OCI-LY7 (cell line): ENCODE measurements at regions of chr7 and their contacts with region 1.

Region 1: DNA sequence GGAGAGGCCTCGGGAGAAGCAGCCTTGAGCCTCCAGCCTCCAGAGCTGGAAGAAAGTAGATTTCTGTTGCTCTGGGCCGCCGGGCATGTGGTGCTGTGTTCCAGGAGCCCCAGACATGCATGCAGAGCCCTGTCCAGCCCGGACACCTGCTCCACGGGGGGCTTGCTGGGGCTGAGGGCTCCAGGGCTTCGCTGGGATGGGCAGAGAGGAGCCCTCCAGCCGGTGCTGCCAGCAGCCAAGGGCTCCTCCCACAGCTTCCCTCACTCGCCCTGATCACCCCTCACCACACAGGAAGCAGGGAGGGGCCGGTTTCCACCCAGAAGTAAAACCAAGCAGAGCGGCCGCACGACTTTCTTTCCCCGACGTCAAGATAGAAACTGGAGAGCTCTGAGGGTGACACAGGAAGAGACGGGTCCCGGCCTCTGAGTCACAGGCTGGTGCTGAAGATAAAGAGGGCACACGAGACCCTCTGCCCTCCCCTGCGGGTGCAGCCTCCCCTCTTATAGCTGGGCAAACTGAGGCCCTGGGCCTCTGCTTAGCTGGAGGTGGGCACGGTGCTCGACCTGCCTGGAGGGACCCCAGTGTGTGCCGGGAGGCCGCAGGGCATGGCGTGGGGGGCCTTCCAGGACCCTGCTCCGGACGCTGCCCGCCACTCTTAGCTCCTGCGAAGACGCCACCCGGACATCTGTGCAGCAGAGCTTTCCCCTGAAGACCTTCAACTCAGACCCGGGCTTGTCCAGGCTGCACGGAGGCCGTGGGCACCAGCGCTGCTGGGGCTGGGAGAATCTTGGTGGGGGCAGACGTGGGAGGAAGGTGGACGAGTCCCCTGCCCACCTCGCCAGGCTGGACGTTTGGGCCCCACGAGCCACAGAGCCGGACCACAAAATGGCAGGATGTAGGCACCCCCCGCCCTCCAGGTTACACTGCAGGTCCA is 31.1 kb downstream of the ADAP1 start:
- DNase-seq: peak; percentile 91
- H3K4me3 ChIP-seq: peak overlapping the region; percentile 59
- H3K27ac ChIP-seq: peak overlapping the region; percentile 72
- H3K4me1 ChIP-seq: peaks cover 33% of the 10 kb centered on the region
- CTCF ChIP-seq: no peak

Region 2: DNA sequence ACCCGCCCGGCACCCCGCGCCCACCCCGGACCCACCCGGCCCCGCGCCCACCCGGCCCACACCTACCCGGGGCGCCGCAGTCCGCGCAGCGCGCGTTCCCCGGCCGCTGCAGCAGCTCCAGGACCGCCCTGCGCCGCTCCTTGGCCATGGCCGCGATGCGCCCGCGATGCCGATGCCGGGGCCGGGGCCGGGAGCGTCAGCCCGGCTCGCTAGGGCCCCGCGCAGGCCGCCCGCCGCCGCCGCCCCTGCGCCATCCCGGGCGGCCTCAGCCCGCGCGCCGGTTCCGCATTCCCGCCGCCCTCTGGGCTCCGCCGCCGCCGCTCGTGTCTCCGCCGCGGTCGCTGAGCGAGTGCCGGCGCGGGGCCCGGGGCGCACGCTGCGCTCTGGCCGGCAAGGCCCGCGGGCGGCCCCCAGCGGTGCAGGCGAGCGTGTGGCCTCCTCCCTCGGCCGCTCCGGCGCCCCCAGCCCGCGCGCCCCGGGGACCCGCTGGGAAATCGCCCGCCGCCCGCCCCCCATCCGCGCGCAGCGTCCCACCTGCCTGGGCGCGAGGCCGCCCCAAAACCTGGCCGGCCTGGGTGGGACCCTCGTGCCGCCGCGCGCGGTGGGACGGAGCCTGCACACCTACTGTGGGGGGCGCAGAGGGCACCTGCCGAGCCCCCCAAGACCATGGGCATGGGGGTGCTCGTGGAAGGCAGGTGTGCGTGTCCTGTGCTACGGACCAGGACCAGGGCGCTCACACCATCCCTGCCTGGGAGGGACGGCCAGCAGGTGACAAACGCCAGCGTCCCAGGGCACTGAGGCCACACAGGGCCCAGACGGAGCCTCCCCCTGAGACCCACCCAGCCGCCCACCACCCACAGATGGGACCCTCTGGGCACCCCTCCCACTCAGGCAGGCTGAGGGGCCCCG is 31.2 kb after region 1 on chr7 and contains the start of gene ADAP1:
- CTCF ChIA-PET with region 1: interaction called, 4 read pairs
- POLR2A ChIA-PET with region 1: no interaction called
- intact Hi-C with region 1: loop called (anchors 1 kb)
- DNase-seq: peak; percentile 52
- H3K4me3 ChIP-seq: no peak within 1 kb of the TSS
- H3K27ac ChIP-seq: no peak within 1 kb of the TSS
- H3K4me1 ChIP-seq: peaks cover 22% of the 10 kb centered on the region
- CTCF ChIP-seq: no peak
- total RNA-seq, gene ADAP1: 0.41 and 2.4 TPM in 2 replicates

Region 3: DNA sequence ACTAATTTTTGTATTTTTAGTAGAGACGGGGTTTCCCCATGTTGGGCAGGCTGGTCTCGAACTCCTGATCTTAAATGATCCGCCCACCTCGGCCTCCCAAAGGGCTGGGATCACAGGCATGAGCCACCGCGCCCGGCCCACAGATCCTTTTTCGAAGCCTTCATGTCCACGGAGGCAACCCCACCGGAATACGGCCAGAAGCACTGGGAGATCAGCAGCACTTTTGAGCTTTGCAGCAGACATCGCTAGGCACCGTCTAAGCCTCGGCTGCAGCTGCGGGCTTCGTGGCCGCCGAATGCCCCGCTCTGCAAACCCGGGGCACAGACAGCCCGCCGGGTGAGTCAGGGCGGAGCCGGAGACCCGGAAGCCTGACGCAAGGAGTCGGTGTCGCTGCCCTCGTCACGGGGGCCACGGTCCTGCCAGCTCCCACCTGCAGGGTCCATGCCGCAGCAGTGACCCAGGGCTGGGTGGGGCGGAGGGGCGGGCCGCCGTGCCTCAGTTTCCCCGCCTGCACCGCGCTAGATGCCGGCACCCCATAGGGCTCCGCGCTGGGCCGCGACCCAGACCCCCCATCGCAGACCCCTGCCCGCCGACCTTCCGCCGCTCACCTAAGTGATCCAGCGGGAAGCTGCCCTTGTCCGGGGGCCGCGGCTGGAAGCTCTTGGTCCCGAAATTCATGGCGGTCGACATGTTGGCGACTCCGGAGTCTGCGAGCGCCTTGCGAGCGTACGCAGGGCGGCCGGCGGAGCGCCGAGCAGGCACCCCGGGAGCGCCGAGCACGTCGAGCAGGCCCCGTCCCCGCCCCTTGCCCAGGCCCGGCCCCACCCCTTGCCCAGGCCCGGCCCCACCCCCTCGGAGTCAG is 51.7 kb after region 1 on chr7 and contains the start of gene COX19:
- CTCF ChIA-PET with region 1: no interaction called
- POLR2A ChIA-PET with region 1: interaction called, 6 read pairs
- intact Hi-C with region 1: loop called (anchors 2 kb)
- DNase-seq: peak; percentile 94
- H3K4me3 ChIP-seq: peak within 1 kb of the TSS; percentile 100
- H3K27ac ChIP-seq: peak within 1 kb of the TSS; percentile 73
- H3K4me1 ChIP-seq: peaks cover 74% of the 10 kb centered on the region
- CTCF ChIP-seq: no peak
- total RNA-seq, gene COX19: 20.3 and 23.2 TPM in 2 replicates

Region 4: DNA sequence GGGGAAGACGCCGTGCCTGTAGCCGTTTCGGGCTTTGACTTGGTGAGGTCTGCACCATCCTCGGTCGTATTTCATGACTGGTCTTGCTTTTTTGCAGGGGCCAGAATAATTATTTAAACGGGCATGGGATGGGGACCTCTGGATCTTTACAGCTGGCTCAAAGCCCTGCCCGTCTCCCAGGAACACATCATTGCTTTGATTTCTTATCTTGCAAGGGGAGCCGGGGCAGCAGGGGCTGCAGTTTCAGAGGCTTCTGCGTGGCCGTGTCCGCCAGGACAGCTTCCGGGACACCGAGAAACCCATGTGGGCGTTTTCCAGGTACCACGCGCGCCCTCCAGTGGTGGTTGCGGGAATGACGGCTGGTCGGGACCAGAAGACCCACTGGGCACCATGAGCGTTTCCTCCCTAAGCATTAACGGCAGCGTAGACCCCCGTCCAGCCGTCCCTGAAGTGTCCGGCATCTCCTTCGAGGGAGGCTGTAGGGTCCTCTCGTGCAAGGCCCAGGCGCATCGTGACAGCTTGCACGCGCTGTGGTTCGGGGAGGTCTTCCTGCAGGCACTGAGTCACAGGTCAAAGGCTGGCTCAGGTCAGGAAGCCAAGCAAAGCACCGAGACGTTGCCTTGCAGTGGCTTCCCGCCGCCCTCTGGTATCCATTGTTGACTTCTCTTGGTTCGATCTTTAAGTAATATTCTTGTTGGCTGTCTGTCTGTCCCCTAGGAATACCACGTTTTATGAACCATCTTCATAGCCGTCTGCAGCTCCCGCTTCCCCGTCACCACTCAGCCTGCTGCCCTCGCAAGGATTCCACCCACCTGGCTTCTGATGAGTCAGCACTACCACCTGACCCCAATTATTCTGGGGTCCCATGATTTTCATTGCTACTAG is 252.8 kb after region 1 on chr7:
- CTCF ChIA-PET with region 1: no interaction called
- POLR2A ChIA-PET with region 1: no interaction called
- intact Hi-C with region 1: loop called (anchors 5 kb)
- DNase-seq: peak; percentile 83
- H3K4me3 ChIP-seq: peak overlapping the region; percentile 33
- H3K27ac ChIP-seq: no peak overlapping the region
- H3K4me1 ChIP-seq: peaks cover 12% of the 10 kb centered on the region
- CTCF ChIP-seq: peak; percentile 91